K562 (cell line): ENCODE measurements at regions of chr3 and their contacts with region 1.

Region 1: DNA sequence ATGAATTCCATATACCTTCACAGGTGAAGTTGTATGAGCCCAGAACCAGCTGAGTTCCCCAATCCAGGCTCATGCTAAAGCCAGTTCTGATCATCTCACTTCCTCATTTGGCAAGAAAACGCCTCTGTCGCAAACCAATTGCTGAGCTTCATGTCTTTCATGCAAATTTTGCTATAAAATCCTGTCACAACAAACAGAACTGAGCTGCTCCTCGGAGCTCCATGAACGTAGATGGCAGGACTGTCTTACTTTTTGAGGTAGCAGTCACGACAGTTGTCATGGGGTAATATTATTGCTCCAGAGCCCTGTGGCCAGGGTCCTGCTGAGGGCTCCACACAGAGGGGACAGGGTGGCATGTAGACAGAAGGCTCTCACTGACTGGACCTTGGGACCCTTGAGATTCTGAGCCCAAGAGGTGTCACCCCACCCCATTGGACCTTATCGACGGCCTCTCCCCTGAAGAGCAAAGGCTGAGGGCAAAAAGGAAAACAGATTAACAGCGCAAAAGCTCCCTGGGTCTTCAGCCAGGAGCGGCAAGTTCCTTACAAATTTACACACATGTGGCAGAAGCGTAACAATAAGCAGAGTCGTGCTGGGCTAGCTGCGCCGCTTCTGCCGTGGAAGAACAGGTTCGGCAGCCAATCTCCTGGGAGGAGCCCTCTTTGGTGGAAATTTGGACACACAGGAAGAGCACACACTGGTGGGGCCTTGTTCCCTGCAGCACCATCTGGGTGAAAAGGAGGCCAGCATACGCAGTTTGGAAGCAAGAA is 249.2 kb downstream of the OPA1 start:
- DNase-seq: peak in 3 of 4 experiments; percentile 37 to 71 (median 42)
- ATAC-seq: peak; percentile 49
- H3K4me3 ChIP-seq: peak overlapping the region; percentile 22
- H3K27ac ChIP-seq: peak overlapping the region; percentile 95
- H3K4me1 ChIP-seq: peaks cover 23 to 60% of the 10 kb centered on the region in 2 experiments
- H3K27me3 ChIP-seq: no peaks in the 10 kb centered on the region
- CTCF ChIP-seq: peak in 1 of 3 experiments; percentile 7; a peak in 1 of 6 replicates
- EP300 ChIP-seq: no peak
- POLR2A ChIP-seq: peak; percentile 39
- RAD21 ChIP-seq: no peak; a peak in 1 of 4 replicates

Region 2: DNA sequence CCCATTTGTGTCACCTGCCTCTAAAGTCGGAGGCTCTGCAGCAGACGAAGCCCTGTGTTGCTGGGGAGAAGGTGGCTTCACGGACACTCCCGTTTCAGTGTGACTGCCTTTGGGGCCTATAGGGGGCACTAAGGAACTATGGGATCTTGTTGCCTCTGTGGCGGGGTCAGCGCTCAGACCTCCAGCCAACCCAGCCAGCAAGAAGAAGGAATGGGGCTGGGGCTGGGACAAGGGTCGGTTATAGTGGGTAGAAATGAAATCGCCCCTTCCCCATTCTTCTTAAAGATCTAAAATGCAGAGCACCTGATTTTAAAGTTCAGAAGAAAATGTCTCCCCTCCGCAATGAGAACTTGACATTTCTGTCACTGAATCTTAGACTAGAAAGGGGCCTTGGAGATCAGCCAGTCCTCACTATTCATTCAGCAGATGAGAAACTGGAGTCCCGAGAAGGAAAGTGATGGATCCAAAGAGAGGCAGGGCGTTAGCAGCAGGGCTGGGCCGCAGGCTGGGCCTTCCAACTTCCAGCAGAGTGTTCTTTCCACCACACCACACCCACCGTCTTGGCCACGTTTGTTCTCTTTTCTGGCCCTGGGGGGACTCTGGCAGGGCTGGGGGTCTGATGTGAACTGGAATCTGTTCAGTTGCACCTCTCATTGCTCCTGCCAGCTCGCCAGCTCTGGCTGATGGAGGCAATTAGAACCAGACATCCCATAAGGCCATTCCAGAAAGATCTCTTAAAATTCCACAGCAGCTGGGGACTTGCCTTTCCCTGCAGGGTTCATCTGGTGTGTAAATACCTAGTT is 53.8 kb before region 1 on chr3:
- CTCF ChIA-PET with region 1: no interaction called
- POLR2A ChIA-PET with region 1: no interaction called
- in situ Hi-C with region 1: no loop called
- intact Hi-C with region 1: loop called (anchors 2 kb)
- DNase-seq: peak; percentile 83 to 89 (median 85)
- ATAC-seq: peak; percentile 99
- H3K4me3 ChIP-seq: no peak overlapping the region
- H3K27ac ChIP-seq: no peak overlapping the region
- H3K4me1 ChIP-seq: peaks cover 10 to 13% of the 10 kb centered on the region in 2 experiments; a peak in 3 of 5 replicates
- H3K27me3 ChIP-seq: no peaks in the 10 kb centered on the region
- CTCF ChIP-seq: peak; percentile 86 to 95 (median 93)
- EP300 ChIP-seq: peak; percentile 59
- POLR2A ChIP-seq: no peak
- RAD21 ChIP-seq: peak; percentile 95 to 96

Region 3: GRCh38 chr3:193805509-193805908 is 36.7 kb before region 1 on chr3:
- CTCF ChIA-PET with region 1: no interaction called
- POLR2A ChIA-PET with region 1: no interaction called
- in situ Hi-C with region 1: no loop called
- intact Hi-C with region 1: no loop called
- DNase-seq: peak in 3 of 4 experiments; percentile 35 to 64 (median 36)
- ATAC-seq: peak; percentile 19; the same call in 1 of the 3 replicates
- H3K4me3 ChIP-seq: no peak overlapping the region
- H3K27ac ChIP-seq: no peak overlapping the region
- H3K4me1 ChIP-seq: peaks cover 4 to 8% of the 10 kb centered on the region in 2 experiments; a peak in 3 of 5 replicates
- H3K27me3 ChIP-seq: no peaks in the 10 kb centered on the region
- CTCF ChIP-seq: no peak
- EP300 ChIP-seq: no peak
- POLR2A ChIP-seq: no peak
- RAD21 ChIP-seq: no peak

Region 4: GRCh38 chr3:193816590-193817311 is 25.5 kb before region 1 on chr3:
- CTCF ChIA-PET with region 1: interaction called, 3 read pairs
- POLR2A ChIA-PET with region 1: interaction called, 16 read pairs
- in situ Hi-C with region 1: no loop called
- intact Hi-C with region 1: no loop called
- DNase-seq: peak; percentile 52 to 78 (median 66)
- ATAC-seq: peak; percentile 92
- H3K4me3 ChIP-seq: no peak overlapping the region
- H3K27ac ChIP-seq: no peak overlapping the region
- H3K4me1 ChIP-seq: peaks cover 9 to 10% of the 10 kb centered on the region in 2 experiments; a peak in 4 of 5 replicates
- H3K27me3 ChIP-seq: no peaks in the 10 kb centered on the region
- CTCF ChIP-seq: no peak
- EP300 ChIP-seq: no peak
- POLR2A ChIP-seq: no peak
- RAD21 ChIP-seq: no peak

Region 5: DNA sequence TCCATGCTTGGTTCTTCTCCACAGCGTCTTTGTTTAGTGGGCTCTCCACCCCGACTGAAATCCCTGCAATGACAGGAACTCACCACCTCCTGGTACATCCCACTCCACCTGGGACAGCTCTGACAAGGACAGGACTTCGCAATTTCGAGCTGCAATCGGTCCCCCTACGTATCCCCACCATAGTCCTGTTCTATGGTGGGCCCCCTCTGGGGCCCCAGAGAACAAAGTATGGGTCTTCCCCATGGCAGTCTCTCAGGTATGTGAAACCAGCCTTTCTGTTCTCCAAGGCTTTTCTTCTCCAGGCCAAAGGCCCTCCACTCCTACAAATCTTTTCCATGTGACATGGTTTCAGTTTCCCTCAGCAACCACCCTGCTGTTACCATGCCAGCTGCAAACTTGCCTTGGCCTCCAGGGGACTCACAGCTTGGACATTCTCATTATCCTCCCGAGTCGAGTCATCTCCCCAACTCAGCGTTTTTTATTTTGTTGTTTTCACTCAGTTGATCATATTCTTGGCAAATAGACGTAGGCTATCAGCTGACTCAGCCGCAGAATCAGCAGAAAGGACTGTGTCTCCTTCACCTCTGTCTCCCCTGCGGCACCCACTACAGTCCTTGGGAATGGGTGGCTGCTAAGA is 15.9 kb before region 1 on chr3:
- CTCF ChIA-PET with region 1: no interaction called
- POLR2A ChIA-PET with region 1: interaction called, 15 read pairs
- in situ Hi-C with region 1: no loop called
- intact Hi-C with region 1: no loop called
- DNase-seq: peak in 2 of 4 experiments; percentile 39 to 49
- ATAC-seq: peak; percentile 72
- H3K4me3 ChIP-seq: no peak overlapping the region
- H3K27ac ChIP-seq: 0 out of 3 replicates have a peak overlapping the region, but pooled peaks have one; percentile 23
- H3K4me1 ChIP-seq: peaks cover 9 to 30% of the 10 kb centered on the region in 2 experiments; a peak in 4 of 5 replicates
- H3K27me3 ChIP-seq: no peaks in the 10 kb centered on the region
- CTCF ChIP-seq: peak; percentile 6 to 44 (median 20); a peak in 2 of 6 replicates
- EP300 ChIP-seq: no peak
- POLR2A ChIP-seq: no peak
- RAD21 ChIP-seq: peak in 1 of 2 experiments; percentile 28; a peak in 2 of 4 replicates

Region 6: GRCh38 chr3:193885808-193886207 is 43.6 kb after region 1 on chr3:
- CTCF ChIA-PET with region 1: no interaction called
- POLR2A ChIA-PET with region 1: no interaction called
- in situ Hi-C with region 1: no loop called
- intact Hi-C with region 1: loop called (anchors 5 kb)
- DNase-seq: peak in 2 of 4 experiments; percentile 60 to 88
- ATAC-seq: peak; percentile 84
- H3K4me3 ChIP-seq: no peak overlapping the region
- H3K27ac ChIP-seq: no peak overlapping the region
- H3K4me1 ChIP-seq: peaks cover 3 to 4% of the 10 kb centered on the region in 2 experiments; a peak in 3 of 5 replicates
- H3K27me3 ChIP-seq: no peaks in the 10 kb centered on the region
- CTCF ChIP-seq: no peak
- EP300 ChIP-seq: peak; percentile 30; the same call in 1 of the 2 replicates
- POLR2A ChIP-seq: no peak
- RAD21 ChIP-seq: peak in 1 of 2 experiments; percentile 20; a peak in 1 of 4 replicates

Region 7: GRCh38 chr3:193910886-193911738 is 68.9 kb after region 1 on chr3:
- CTCF ChIA-PET with region 1: no interaction called
- POLR2A ChIA-PET with region 1: interaction called, 6 read pairs
- in situ Hi-C with region 1: no loop called
- intact Hi-C with region 1: loop called (anchors 1 kb)
- DNase-seq: peak; percentile 48 to 93 (median 68)
- ATAC-seq: peak; percentile 88
- H3K4me3 ChIP-seq: peak overlapping the region; percentile 18; the same call in 1 of the 2 replicates
- H3K27ac ChIP-seq: peak overlapping the region; percentile 92
- H3K4me1 ChIP-seq: peaks cover 30 to 55% of the 10 kb centered on the region in 2 experiments
- H3K27me3 ChIP-seq: no peaks in the 10 kb centered on the region
- CTCF ChIP-seq: no peak; a peak in 1 of 6 replicates
- EP300 ChIP-seq: peak; percentile 97
- POLR2A ChIP-seq: no peak; the same call in 1 of the 2 replicates
- RAD21 ChIP-seq: peak; percentile 60 to 61; a peak in 3 of 4 replicates